ENCODE measurements at regions of chr16 and their contacts with region 1.

Region 1: GRCh38 chr16:55480228-55480661 is 1.2 kb downstream of the MMP2 start:
- DNase-seq: peak; percentile 93
- ATAC-seq: peak; percentile 72
- H3K4me3 ChIP-seq: peak overlapping the region; percentile 85
- H3K27ac ChIP-seq: peak overlapping the region; percentile 85
- H3K4me1 ChIP-seq: peaks cover 9% of the 10 kb centered on the region
- H3K27me3 ChIP-seq: no peaks in the 10 kb centered on the region
- CTCF ChIP-seq: no peak
- POLR2A ChIP-seq: peak; percentile 72; the same call in 1 of the 2 replicates
- RAD21 ChIP-seq: no peak

Region 2: GRCh38 chr16:55146966-55147365 is 333.3 kb before region 1 on chr16:
- CTCF ChIA-PET with region 1: no interaction called
- POLR2A ChIA-PET with region 1: no interaction called
- dilution Hi-C with region 1: no loop called
- in situ Hi-C with region 1: no loop called
- intact Hi-C with region 1: no loop called
- DNase-seq: no peak
- ATAC-seq: no peak
- H3K4me3 ChIP-seq: no peak overlapping the region
- H3K27ac ChIP-seq: no peak overlapping the region
- H3K4me1 ChIP-seq: no peaks in the 10 kb centered on the region
- H3K27me3 ChIP-seq: no peaks in the 10 kb centered on the region
- CTCF ChIP-seq: no peak
- POLR2A ChIP-seq: no peak
- RAD21 ChIP-seq: no peak

Region 3: DNA sequence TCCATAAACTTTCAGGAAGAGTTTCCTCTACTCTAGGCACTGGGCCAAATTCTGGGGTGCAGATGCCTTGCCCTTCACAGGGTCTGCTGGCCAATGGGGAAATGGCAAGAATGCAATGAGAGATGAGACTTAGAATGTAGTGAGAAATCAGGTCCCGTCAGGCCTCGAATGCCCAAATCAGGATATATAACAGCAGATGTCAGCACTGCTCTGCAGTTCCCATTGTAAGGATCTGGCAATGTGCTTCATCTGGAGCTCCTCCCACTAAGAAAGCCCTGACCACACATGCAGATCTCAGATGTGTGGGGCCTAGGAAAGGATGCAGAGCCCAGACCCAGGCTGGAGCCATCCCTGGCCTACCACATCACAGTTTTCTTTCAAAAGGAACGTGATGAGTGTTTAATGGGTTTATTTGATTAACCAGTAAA is 14.8 kb after region 1 on chr16:
- CTCF ChIA-PET with region 1: no interaction called
- POLR2A ChIA-PET with region 1: interaction called, 4 read pairs
- dilution Hi-C with region 1: no loop called
- in situ Hi-C with region 1: no loop called
- intact Hi-C with region 1: loop called (anchors 1 kb)
- DNase-seq: peak; percentile 96
- ATAC-seq: peak; percentile 74
- H3K4me3 ChIP-seq: no peak overlapping the region
- H3K27ac ChIP-seq: no peak overlapping the region
- H3K4me1 ChIP-seq: peaks cover 13% of the 10 kb centered on the region
- H3K27me3 ChIP-seq: no peaks in the 10 kb centered on the region
- CTCF ChIP-seq: peak; percentile 63
- POLR2A ChIP-seq: no peak
- RAD21 ChIP-seq: peak; percentile 85

Region 4: GRCh38 chr16:55499951-55500529 is 19.8 kb after region 1 on chr16:
- CTCF ChIA-PET with region 1: no interaction called
- POLR2A ChIA-PET with region 1: interaction called, 4 read pairs
- dilution Hi-C with region 1: no loop called
- in situ Hi-C with region 1: no loop called
- intact Hi-C with region 1: loop called (anchors 1 kb)
- DNase-seq: peak; percentile 99
- ATAC-seq: peak; percentile 77
- H3K4me3 ChIP-seq: no peak overlapping the region
- H3K27ac ChIP-seq: peak overlapping the region; percentile 83
- H3K4me1 ChIP-seq: peaks cover 34% of the 10 kb centered on the region
- H3K27me3 ChIP-seq: no peaks in the 10 kb centered on the region
- CTCF ChIP-seq: no peak
- POLR2A ChIP-seq: peak; percentile 58; the same call in 1 of the 2 replicates
- RAD21 ChIP-seq: no peak